ENCODE measurements at regions of chr1 and their contacts with region 1.

Region 1: DNA sequence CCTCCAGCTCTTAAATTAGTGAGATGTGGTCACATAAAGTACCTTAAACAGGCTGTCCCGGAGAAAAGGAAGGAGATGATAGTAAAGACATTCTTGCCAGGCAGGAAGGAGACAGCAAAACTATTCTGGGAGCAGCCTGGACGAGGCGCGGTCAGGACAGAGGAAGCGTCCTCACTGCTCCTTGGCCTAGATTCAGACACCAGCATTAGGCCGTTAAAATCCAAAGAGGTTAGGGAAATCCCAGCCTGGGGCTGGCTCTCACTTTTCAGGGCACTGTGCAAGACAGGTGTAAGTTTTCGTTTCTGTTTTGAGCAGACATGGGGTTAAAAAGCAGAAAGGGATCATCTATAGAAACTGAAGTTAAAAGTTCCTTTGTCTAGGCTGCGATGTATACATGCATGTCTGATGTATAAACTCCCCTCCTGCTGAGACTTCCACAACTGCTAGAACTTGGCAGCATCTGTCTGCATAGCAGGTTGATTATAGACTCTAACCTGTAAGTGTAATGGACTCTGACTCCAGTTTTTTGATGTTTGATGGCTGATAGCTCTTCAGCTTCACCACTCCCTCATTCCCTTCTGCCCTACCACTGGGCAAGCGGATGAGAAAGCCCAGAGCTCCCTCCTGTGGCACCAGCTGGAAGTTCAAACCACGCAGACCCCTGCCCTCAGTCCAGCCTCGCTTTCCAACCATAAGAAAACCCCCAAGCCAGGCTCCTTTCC is 21.5 kb downstream of the STPG1 start:
- H3K4me3 ChIP-seq: no peak overlapping the region
- H3K27ac ChIP-seq: no peak overlapping the region
- H3K4me1 ChIP-seq: no peaks in the 10 kb centered on the region
- CTCF ChIP-seq: peak; percentile 72

Region 2: GRCh38 chr1:24150234-24151174 is 241.5 kb before region 1 on chr1:
- CTCF ChIA-PET with region 1: interaction called, 80 read pairs
- POLR2A ChIA-PET with region 1: no interaction called
- H3K4me3 ChIP-seq: no peak overlapping the region
- H3K27ac ChIP-seq: no peak overlapping the region
- H3K4me1 ChIP-seq: no peaks in the 10 kb centered on the region
- CTCF ChIP-seq: peak; percentile 92

Region 3: DNA sequence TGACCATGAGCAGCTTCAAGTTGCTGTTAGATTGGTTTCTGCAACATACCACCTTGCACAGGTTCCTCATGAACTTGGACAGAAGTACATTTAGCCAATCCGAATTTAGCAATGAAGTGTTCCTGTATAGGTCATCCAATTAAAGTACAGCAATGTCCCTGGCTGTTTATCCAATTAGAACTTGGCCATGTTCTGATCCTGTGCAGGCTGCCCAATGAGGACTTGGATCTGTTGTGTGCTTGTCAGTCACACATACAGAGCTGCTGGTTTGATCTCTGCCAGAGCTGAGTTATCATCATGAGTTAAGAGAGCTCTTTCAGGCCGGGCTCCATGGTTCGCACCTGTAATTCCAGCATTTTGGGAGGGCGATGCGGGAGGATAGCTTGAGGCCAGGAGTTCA is 183.0 kb before region 1 on chr1:
- CTCF ChIA-PET with region 1: interaction called, 611 read pairs
- POLR2A ChIA-PET with region 1: no interaction called
- H3K4me3 ChIP-seq: no peak overlapping the region
- H3K27ac ChIP-seq: no peak overlapping the region
- H3K4me1 ChIP-seq: no peaks in the 10 kb centered on the region
- CTCF ChIP-seq: no peak

Region 4: DNA sequence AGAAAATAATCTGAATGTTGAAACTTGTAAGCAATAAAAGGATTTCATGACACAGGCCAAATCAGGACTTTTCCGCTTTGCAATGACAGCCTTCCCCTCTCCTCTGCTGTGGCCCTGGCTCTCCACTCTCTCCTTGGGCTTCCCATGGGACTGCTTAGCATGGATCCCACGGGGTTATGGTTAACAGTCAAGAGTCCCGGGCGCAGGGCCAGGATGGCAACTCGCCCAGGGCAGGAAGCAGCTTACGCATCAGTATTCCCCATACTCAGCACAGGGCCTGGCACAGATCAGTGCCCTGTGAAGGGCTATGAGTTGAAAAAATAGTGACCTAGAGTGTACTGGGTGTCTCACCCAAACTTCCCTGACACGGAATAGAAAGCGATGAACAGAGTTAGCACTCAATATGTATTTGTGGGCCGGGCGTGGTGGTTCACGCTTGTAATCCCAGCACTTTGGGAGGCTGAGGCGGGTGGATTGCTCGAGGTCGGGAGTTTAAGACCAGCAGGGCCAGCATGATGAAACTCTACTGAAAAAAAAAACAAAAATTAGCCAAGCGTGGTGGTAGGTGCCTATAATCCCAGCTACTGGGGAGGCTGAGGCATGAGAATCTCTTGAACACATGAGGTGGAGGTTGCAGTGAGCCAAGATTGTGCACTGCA is 102.0 kb before region 1 on chr1:
- CTCF ChIA-PET with region 1: interaction called, 21 read pairs
- POLR2A ChIA-PET with region 1: no interaction called
- H3K4me3 ChIP-seq: no peak overlapping the region
- H3K27ac ChIP-seq: peak overlapping the region; percentile 29; the same call in 1 of the 2 replicates
- H3K4me1 ChIP-seq: peaks cover 8% of the 10 kb centered on the region
- CTCF ChIP-seq: no peak

Region 5: GRCh38 chr1:24379733-24380315 is 12.2 kb before region 1 on chr1:
- CTCF ChIA-PET with region 1: interaction called, 42 read pairs
- POLR2A ChIA-PET with region 1: no interaction called
- H3K4me3 ChIP-seq: no peak overlapping the region
- H3K27ac ChIP-seq: no peak overlapping the region
- H3K4me1 ChIP-seq: no peaks in the 10 kb centered on the region
- CTCF ChIP-seq: no peak

Region 6: GRCh38 chr1:24421502-24421901 is 29.5 kb after region 1 on chr1:
- CTCF ChIA-PET with region 1: interaction called, 12 read pairs
- POLR2A ChIA-PET with region 1: no interaction called
- H3K4me3 ChIP-seq: no peak overlapping the region
- H3K27ac ChIP-seq: no peak overlapping the region
- H3K4me1 ChIP-seq: peaks cover 5% of the 10 kb centered on the region
- CTCF ChIP-seq: no peak

Region 7: DNA sequence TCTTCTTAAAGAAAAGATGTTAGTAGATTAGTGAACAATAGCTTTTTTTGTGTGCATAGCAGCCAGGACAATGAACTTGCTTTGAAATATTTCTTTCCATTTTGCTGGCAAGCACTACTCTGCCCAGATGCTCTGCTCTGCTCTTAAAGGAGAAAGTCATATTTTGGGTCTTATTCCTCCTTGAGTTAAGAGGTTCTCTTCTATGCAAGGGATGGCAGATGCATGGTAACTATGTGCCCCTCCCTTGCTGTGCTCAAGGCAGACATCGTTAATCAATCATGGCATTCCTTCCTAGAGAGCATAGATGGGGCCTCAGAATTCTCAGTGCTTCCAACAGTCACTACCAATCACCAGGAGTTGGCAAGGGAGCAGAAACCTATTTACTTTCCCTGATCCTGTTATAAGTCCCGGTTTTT is 51.2 kb after region 1 on chr1:
- CTCF ChIA-PET with region 1: no interaction called
- POLR2A ChIA-PET with region 1: no interaction called
- H3K4me3 ChIP-seq: no peak overlapping the region
- H3K27ac ChIP-seq: no peak overlapping the region
- H3K4me1 ChIP-seq: peaks cover 2% of the 10 kb centered on the region; the same call in 1 of the 2 replicates
- CTCF ChIP-seq: no peak

Region 8: DNA sequence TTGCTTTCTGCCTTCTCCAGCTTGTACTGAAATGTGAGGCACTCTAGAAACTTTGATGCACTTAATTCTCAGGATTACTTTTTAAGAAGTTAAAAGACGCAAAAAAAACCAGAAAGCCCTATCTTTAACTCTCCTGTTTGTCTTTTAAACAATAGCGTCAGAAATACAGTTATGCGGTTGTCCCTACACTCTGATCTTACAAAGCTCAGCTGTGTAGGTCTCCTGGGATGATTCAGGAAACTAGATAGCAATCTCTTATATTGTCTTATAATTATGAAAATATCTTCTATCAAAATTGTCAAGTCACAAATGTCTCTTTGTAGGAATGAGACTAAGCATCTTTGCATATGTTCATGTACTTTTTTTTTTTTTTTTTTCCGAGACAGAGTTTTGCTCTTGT is 83.7 kb after region 1 on chr1:
- CTCF ChIA-PET with region 1: no interaction called
- POLR2A ChIA-PET with region 1: no interaction called
- H3K4me3 ChIP-seq: no peak overlapping the region
- H3K27ac ChIP-seq: no peak overlapping the region
- H3K4me1 ChIP-seq: no peaks in the 10 kb centered on the region
- CTCF ChIP-seq: no peak

Region 9: GRCh38 chr1:24517898-24518297 is 125.9 kb after region 1 on chr1:
- CTCF ChIA-PET with region 1: no interaction called
- POLR2A ChIA-PET with region 1: no interaction called
- H3K4me3 ChIP-seq: no peak overlapping the region
- H3K27ac ChIP-seq: no peak overlapping the region
- H3K4me1 ChIP-seq: no peaks in the 10 kb centered on the region
- CTCF ChIP-seq: no peak

Region 10: GRCh38 chr1:24704411-24705259 is 312.6 kb after region 1 on chr1:
- CTCF ChIA-PET with region 1: no interaction called
- POLR2A ChIA-PET with region 1: no interaction called
- H3K4me3 ChIP-seq: no peak overlapping the region; the same call in 1 of the 2 replicates
- H3K27ac ChIP-seq: peak overlapping the region; percentile 67
- H3K4me1 ChIP-seq: peaks cover 6% of the 10 kb centered on the region; the same call in 1 of the 2 replicates
- CTCF ChIP-seq: no peak